Activated CD4-positive, alpha-beta memory T cell treated with anti-CD3 and anti-CD28 coated beads, Interleukin-2, amount 10 ng/mL, durations not matched to agents 7 days and 5 days (primary cell): ENCODE measurements at regions of chr1 and their contacts with region 1.

Region 1: GRCh38 chr1:204207136-204207616 is 6.6 kb downstream of the GOLT1A start:
- DNase-seq: peak; percentile 73
- H3K4me3 Mint-ChIP-seq: no peak overlapping the region
- H3K27ac Mint-ChIP-seq: no peak overlapping the region
- H3K4me1 Mint-ChIP-seq: no peaks in the 10 kb centered on the region
- H3K27me3 Mint-ChIP-seq: peaks cover 33% of the 10 kb centered on the region

Region 2: GRCh38 chr1:203954788-203955566 is 252.2 kb before region 1 on chr1:
- CTCF ChIA-PET with region 1: no interaction called
- POLR2A ChIA-PET with region 1: no interaction called
- DNase-seq: no peak
- H3K4me3 Mint-ChIP-seq: no peak overlapping the region
- H3K27ac Mint-ChIP-seq: no peak overlapping the region
- H3K4me1 Mint-ChIP-seq: no peaks in the 10 kb centered on the region
- H3K27me3 Mint-ChIP-seq: peaks cover 13% of the 10 kb centered on the region

Region 3: GRCh38 chr1:204162231-204163074 is 44.7 kb before region 1 on chr1:
- CTCF ChIA-PET with region 1: interaction called, 18 read pairs
- POLR2A ChIA-PET with region 1: no interaction called
- DNase-seq: peak; percentile 79
- H3K4me3 Mint-ChIP-seq: no peak overlapping the region
- H3K27ac Mint-ChIP-seq: no peak overlapping the region
- H3K4me1 Mint-ChIP-seq: no peaks in the 10 kb centered on the region
- H3K27me3 Mint-ChIP-seq: peaks cover 2% of the 10 kb centered on the region

Region 4: GRCh38 chr1:204296431-204296988 is 89.3 kb after region 1 on chr1:
- CTCF ChIA-PET with region 1: no interaction called
- POLR2A ChIA-PET with region 1: no interaction called
- DNase-seq: no peak
- H3K4me3 Mint-ChIP-seq: no peak overlapping the region
- H3K27ac Mint-ChIP-seq: no peak overlapping the region
- H3K4me1 Mint-ChIP-seq: peaks cover 3% of the 10 kb centered on the region
- H3K27me3 Mint-ChIP-seq: peaks cover 41% of the 10 kb centered on the region

Region 5: DNA sequence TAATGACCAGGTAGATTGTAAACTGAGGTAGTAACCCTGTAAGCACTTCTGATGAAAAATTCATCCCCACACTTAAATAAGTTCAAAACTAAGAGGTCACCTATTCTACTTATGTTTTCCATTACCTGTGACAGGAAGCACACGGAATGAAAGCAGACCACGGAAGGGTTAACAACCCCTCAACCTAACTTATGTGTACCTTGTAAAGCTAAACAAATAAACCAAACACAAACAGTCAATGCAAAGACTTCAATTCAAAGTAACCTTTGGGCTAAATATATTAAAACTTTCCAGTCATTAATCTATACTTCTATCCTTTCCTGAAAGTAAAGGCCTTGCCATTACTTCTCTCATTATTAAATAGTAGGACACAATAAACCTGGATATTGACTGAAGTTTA is 197.5 kb after region 1 on chr1:
- CTCF ChIA-PET with region 1: no interaction called
- POLR2A ChIA-PET with region 1: no interaction called
- DNase-seq: no peak
- H3K4me3 Mint-ChIP-seq: no peak overlapping the region
- H3K27ac Mint-ChIP-seq: no peak overlapping the region
- H3K4me1 Mint-ChIP-seq: peaks cover 31% of the 10 kb centered on the region
- H3K27me3 Mint-ChIP-seq: no peaks in the 10 kb centered on the region

Region 6: DNA sequence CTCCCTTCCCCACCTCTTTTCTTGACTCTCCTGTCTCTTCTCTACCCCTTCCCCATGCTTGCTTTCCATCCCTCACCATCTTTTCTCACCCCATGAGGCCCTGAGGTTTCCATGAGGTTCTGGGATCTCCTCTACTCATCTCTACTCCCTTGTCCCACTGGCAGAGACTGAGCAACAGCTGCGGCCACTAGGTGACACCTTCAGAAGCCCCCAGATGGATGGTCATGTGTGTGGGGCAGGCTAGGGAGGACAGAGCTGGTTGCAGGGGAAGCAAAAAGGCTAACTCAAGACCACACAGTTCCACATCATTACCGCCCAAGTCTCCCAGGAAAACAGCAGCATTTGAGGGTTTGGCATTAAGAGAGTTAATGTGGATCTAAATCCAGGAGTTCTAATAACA is 433.4 kb after region 1 on chr1:
- CTCF ChIA-PET with region 1: no interaction called
- POLR2A ChIA-PET with region 1: no interaction called
- DNase-seq: no peak
- H3K4me3 Mint-ChIP-seq: no peak overlapping the region
- H3K27ac Mint-ChIP-seq: no peak overlapping the region
- H3K4me1 Mint-ChIP-seq: no peaks in the 10 kb centered on the region
- H3K27me3 Mint-ChIP-seq: peaks cover 6% of the 10 kb centered on the region